ENCODE measurements at regions of chr21 and their contacts with region 1.

Region 1: GRCh38 chr21:32770871-32771523 is 558 bp downstream of the PAXBP1 start:
- DNase-seq: peak in 5 of 9 experiments; percentile 26 to 59 (median 51)
- ATAC-seq: peak; percentile 15
- H3K4me3 ChIP-seq: peak overlapping the region; percentile 69 to 82
- H3K4me3 Mint-ChIP-seq: peak overlapping the region; percentile 96
- H3K27ac ChIP-seq: peak overlapping the region; percentile 69 to 75
- H3K27ac Mint-ChIP-seq: peak overlapping the region; percentile 87
- H3K4me1 ChIP-seq: peaks cover 42% of the 10 kb centered on the region
- H3K4me1 Mint-ChIP-seq: peaks cover 66% of the 10 kb centered on the region
- H3K27me3 ChIP-seq: no peaks in the 10 kb centered on the region
- H3K27me3 Mint-ChIP-seq: no peaks in the 10 kb centered on the region
- CTCF ChIP-seq: no peak

Region 2: DNA sequence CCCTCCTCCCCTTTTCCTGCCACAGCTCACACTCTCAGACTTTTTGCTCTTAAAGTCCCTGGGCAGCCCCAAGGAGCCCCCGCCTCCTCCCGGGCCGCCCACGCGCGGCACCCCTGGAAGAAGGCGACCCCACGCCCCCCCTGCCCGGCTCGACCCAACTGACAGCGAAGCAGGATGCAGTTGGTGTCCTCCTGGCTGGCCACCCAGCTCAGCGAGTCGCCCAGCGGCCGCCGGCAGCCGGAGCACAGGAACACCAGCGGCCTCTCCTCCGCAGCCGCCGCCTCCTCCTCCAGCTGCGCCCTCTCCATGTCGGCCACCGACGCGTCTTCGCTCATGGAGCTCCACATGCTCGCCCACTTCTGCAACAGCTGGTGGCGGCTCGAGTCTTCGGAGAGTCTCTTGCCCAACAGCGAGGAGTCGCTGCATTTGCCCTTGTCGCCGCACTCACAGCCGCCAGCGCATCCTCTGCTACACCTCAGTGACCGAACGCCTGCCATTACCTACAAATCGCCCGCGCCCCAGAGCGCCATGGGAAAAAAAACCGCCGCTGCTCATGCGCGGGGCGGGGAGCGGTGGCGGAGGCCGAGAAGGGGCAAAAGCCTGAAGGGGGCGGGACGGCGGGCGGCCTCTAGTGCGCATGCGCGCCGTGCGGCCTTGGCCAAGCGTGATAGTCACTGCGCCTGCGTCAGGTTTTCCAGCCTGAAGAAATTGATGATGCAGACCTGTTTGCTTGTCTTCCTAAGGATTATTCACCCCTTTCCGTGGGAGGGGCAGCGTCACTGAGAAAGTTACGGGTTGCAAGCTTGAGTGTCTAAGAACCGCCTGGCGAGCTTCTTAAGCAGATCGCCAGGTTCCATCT is 492.2 kb before region 1 on chr21 and contains the start of gene MIS18A:
- CTCF ChIA-PET with region 1: no interaction called
- POLR2A ChIA-PET with region 1: no interaction called
- intact Hi-C with region 1: loop called (anchors 2 to 5 kb)
- DNase-seq: peak; percentile 95 to 99 (median 97)
- ATAC-seq: peak; percentile 95
- H3K4me3 ChIP-seq: peak within 1 kb of the TSS; percentile 67 to 74
- H3K4me3 Mint-ChIP-seq: peak within 1 kb of the TSS; percentile 99
- H3K27ac ChIP-seq: peak within 1 kb of the TSS; percentile 33 to 69
- H3K27ac Mint-ChIP-seq: peak within 1 kb of the TSS; percentile 92
- H3K4me1 ChIP-seq: peaks cover 16% of the 10 kb centered on the region
- H3K4me1 Mint-ChIP-seq: peaks cover 31% of the 10 kb centered on the region
- H3K27me3 ChIP-seq: no peaks in the 10 kb centered on the region
- H3K27me3 Mint-ChIP-seq: no peaks in the 10 kb centered on the region
- CTCF ChIP-seq: no peak
- total RNA-seq, gene MIS18A: 3.7 to 5.1 TPM

Region 3: GRCh38 chr21:32412162-32413014 is 358.6 kb before region 1 on chr21 and contains the start of gene EVA1C:
- CTCF ChIA-PET with region 1: no interaction called
- POLR2A ChIA-PET with region 1: interaction called, 4 read pairs
- intact Hi-C with region 1: loop called in 1 of 2 experiments (anchors 5 kb)
- DNase-seq: peak; percentile 51 to 90 (median 76)
- ATAC-seq: peak; percentile 71
- H3K4me3 ChIP-seq: peak within 1 kb of the TSS; percentile 63 to 96
- H3K4me3 Mint-ChIP-seq: peak within 1 kb of the TSS; percentile 95
- H3K27ac ChIP-seq: peak within 1 kb of the TSS; percentile 86 to 93
- H3K27ac Mint-ChIP-seq: peak within 1 kb of the TSS; percentile 96
- H3K4me1 ChIP-seq: peaks cover 35% of the 10 kb centered on the region
- H3K4me1 Mint-ChIP-seq: peaks cover 48% of the 10 kb centered on the region
- H3K27me3 ChIP-seq: no peaks in the 10 kb centered on the region
- H3K27me3 Mint-ChIP-seq: no peaks in the 10 kb centered on the region
- CTCF ChIP-seq: peak; percentile 23
- total RNA-seq, gene EVA1C: 6.9 to 10.3 TPM

Region 4: DNA sequence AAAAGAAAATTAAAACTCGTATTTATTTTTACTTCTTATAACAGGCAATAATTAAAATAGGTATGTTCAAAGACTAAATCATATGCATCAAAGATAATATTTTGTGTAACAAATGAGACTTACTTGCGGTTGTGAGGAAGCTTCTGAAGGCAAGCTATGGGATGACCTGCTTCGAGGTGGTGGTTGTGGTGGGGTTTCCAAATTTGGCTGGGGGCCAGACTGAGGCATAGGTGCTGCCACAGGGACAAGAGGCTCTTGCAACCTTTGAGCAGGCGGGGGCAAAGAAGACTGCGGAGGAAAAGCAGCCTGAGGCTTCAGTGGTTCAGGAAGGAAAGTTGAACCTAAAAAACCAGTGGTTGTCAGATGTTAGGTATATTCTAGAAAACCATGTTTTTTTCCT is 132.2 kb before region 1 on chr21:
- CTCF ChIA-PET with region 1: no interaction called
- POLR2A ChIA-PET with region 1: no interaction called
- intact Hi-C with region 1: no loop called
- DNase-seq: no peak
- ATAC-seq: no peak
- H3K4me3 ChIP-seq: no peak overlapping the region
- H3K4me3 Mint-ChIP-seq: no peak overlapping the region
- H3K27ac ChIP-seq: no peak overlapping the region
- H3K27ac Mint-ChIP-seq: no peak overlapping the region
- H3K4me1 ChIP-seq: no peaks in the 10 kb centered on the region
- H3K4me1 Mint-ChIP-seq: no peaks in the 10 kb centered on the region
- H3K27me3 ChIP-seq: no peaks in the 10 kb centered on the region
- H3K27me3 Mint-ChIP-seq: no peaks in the 10 kb centered on the region
- CTCF ChIP-seq: no peak

Region 5: DNA sequence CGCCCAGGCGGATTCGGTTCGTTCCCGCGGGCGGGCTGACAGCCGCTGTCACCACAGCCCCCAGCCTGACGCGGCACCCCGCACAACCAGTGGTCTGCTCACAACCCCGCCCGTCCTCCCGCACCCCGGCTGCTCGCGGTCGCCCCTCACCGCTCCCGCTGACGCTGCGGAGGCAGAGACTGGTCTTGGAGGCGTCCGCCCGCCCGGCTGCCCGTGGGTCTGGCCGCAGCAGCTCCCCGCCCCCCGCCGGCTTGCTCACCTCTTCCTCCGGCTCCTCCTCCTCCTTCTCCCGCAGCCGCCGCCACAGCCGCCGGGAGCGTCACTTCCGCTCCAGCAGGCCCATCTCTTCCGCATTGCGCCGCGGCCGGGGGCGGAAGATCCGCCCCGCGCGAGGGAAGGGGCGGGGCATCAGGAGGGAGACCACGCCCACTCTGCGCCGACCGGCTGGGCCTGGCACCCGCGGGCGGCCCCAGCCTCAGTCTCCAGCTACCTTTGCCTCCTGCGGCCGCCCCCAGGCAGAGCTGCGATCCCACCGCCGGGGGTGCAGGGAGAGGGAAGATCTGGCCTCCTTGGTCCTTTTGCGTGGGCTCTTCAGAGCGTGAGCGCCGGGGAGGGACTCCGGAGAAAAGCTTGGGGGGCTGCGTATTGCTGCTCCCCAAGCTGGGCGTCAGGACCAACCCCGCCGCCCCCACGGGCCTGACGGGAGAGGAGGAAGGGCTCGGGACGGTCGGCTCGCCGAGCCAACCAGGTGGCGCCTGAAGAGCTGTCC is 43.1 kb before region 1 on chr21 and contains the start of gene SYNJ1:
- CTCF ChIA-PET with region 1: interaction called, 5 read pairs
- POLR2A ChIA-PET with region 1: interaction called, 40 read pairs
- intact Hi-C with region 1: loop called (anchors 1 kb)
- DNase-seq: peak; percentile 86 to 96 (median 93)
- ATAC-seq: peak; percentile 86
- H3K4me3 ChIP-seq: peak within 1 kb of the TSS; percentile 86 to 99
- H3K4me3 Mint-ChIP-seq: peak within 1 kb of the TSS; percentile 94
- H3K27ac ChIP-seq: peak within 1 kb of the TSS; percentile 76 to 82
- H3K27ac Mint-ChIP-seq: peak within 1 kb of the TSS; percentile 93
- H3K4me1 ChIP-seq: peaks cover 45% of the 10 kb centered on the region
- H3K4me1 Mint-ChIP-seq: peaks cover 61% of the 10 kb centered on the region
- H3K27me3 ChIP-seq: no peaks in the 10 kb centered on the region
- H3K27me3 Mint-ChIP-seq: no peaks in the 10 kb centered on the region
- CTCF ChIP-seq: no peak
- total RNA-seq, gene SYNJ1: 10.5 to 10.7 TPM

Region 6: GRCh38 chr21:32826329-32827167 is 55.6 kb after region 1 on chr21:
- CTCF ChIA-PET with region 1: interaction called, 5 read pairs
- POLR2A ChIA-PET with region 1: no interaction called
- intact Hi-C with region 1: loop called in 1 of 2 experiments (anchors 2 kb)
- DNase-seq: peak in 6 of 9 experiments; percentile 7 to 64 (median 38)
- ATAC-seq: peak; percentile 70
- H3K4me3 ChIP-seq: no peak overlapping the region
- H3K4me3 Mint-ChIP-seq: no peak overlapping the region
- H3K27ac ChIP-seq: no peak overlapping the region
- H3K27ac Mint-ChIP-seq: no peak overlapping the region
- H3K4me1 ChIP-seq: no peaks in the 10 kb centered on the region
- H3K4me1 Mint-ChIP-seq: peaks cover 3% of the 10 kb centered on the region
- H3K27me3 ChIP-seq: peaks cover 0 to 2% of the 10 kb centered on the region in 2 experiments
- H3K27me3 Mint-ChIP-seq: no peaks in the 10 kb centered on the region
- CTCF ChIP-seq: peak; percentile 53

Region 7: GRCh38 chr21:33036430-33037162 is 265.6 kb after region 1 on chr21:
- CTCF ChIA-PET with region 1: no interaction called
- POLR2A ChIA-PET with region 1: no interaction called
- intact Hi-C with region 1: no loop called
- DNase-seq: peak in 6 of 9 experiments; percentile 8 to 58 (median 36)
- ATAC-seq: peak; percentile 70
- H3K4me3 ChIP-seq: no peak overlapping the region
- H3K4me3 Mint-ChIP-seq: peak overlapping the region; percentile 2
- H3K27ac ChIP-seq: no peak overlapping the region
- H3K27ac Mint-ChIP-seq: no peak overlapping the region
- H3K4me1 ChIP-seq: peaks cover 7% of the 10 kb centered on the region
- H3K4me1 Mint-ChIP-seq: peaks cover 10% of the 10 kb centered on the region
- H3K27me3 ChIP-seq: peaks cover 0 to 3% of the 10 kb centered on the region in 2 experiments
- H3K27me3 Mint-ChIP-seq: peaks cover 30% of the 10 kb centered on the region
- CTCF ChIP-seq: no peak

Region 8: DNA sequence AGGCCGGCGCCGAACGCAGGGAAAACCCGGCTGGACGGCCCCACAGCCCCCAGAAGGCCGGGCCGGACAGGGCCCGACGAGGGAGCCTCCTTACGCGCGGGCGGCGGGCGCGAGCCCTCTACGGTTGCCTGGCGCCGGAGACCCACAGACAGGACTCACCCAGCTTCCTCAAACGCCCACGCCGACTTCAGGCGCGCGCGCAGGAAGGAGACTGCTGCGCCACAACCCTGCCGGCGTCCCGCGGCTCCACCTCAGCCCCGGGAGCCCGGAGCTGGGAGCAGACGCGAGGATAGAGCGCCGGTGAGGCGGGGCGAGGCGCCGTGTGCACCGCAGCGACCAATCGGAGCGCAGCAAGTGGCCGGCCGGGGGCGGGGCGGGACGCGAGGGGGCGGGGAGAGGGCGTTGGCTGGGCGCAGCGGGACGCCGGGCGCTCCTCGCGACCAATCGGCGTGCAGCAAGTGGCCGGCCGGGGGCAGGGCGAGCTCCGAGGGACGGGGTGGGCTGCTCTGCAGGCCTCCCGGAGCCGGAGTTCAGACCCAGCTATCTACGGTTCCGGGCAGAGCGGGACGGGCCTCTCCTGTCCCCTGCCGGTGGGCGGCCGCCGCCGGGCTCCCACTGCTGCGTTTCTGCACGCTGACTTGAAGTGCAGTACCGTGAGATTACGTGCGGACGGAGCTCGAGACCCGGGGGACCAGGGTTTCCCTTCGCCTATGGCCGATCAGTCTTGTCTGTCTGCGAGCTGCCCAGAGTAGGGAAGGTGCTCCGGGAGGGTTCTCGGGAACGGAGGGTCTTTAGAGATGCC is 708.9 kb after region 1 on chr21 and contains the start of gene TMEM50B:
- CTCF ChIA-PET with region 1: no interaction called
- POLR2A ChIA-PET with region 1: interaction called, 15 read pairs
- intact Hi-C with region 1: loop called in 1 of 2 experiments (anchors 1 kb)
- DNase-seq: peak; percentile 94 to 98 (median 95)
- ATAC-seq: peak; percentile 87
- H3K4me3 ChIP-seq: peak within 1 kb of the TSS; percentile 79 to 88
- H3K4me3 Mint-ChIP-seq: peak within 1 kb of the TSS; percentile 89
- H3K27ac ChIP-seq: peak within 1 kb of the TSS; percentile 83 to 87
- H3K27ac Mint-ChIP-seq: peak within 1 kb of the TSS; percentile 96
- H3K4me1 ChIP-seq: peaks cover 13% of the 10 kb centered on the region
- H3K4me1 Mint-ChIP-seq: peaks cover 28% of the 10 kb centered on the region
- H3K27me3 ChIP-seq: no peaks in the 10 kb centered on the region
- H3K27me3 Mint-ChIP-seq: no peaks in the 10 kb centered on the region
- CTCF ChIP-seq: peak; percentile 31
- total RNA-seq, gene TMEM50B: 32.6 to 34.0 TPM

Region 9: DNA sequence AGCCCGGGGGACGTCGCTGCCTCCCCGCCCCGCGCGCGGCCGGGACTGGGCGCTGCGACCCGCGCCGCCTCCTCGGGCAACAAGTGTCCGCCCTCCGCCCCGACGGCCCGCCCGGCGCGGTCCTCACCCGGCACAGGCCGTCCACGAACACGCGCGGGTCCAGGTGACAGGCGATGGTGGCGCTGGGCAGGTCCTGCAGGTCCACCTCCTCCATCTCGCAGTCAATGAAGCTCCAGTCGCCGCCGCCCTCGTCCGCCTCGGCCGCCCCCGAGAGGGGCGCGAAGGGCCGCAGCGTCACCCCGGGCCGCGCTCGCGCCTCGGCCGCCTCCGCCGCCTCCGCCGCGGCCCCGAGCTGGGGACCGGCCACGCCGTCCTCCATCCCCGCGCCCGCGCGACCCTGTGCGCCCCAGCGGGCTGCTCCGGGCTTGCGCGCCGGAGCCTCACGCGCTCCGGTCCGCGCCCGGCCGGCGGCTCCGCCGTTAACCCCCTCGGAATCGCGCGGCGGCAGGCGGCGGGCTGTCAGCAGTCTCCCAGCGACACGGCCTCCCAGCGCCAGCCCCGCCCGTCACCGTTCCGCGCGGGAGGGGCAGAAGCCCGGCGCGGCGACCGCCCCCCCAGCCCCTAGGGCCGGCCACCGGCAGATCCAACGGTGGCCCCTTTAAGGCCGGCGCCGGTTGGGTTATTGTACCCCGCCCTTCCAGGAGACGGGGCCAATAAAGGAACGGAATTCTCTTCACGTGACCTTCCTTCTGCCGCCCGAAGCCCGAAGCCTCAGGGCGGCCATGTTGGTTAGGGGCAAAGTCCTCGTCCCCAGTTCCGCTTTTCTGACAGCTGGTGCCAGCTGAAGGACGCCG is 1843.9 kb after region 1 on chr21 and contains the start of gene RCAN1:
- CTCF ChIA-PET with region 1: no interaction called
- POLR2A ChIA-PET with region 1: no interaction called
- intact Hi-C with region 1: loop called in 1 of 2 experiments (anchors 5 kb)
- DNase-seq: peak; percentile 64 to 94 (median 85)
- ATAC-seq: peak; percentile 95
- H3K4me3 ChIP-seq: peak within 1 kb of the TSS; percentile 51 to 63
- H3K4me3 Mint-ChIP-seq: peak within 1 kb of the TSS; percentile 90
- H3K27ac ChIP-seq: peak within 1 kb of the TSS; percentile 41 to 68
- H3K27ac Mint-ChIP-seq: peak within 1 kb of the TSS; percentile 91
- H3K4me1 ChIP-seq: peaks cover 13% of the 10 kb centered on the region
- H3K4me1 Mint-ChIP-seq: peaks cover 21% of the 10 kb centered on the region
- H3K27me3 ChIP-seq: no peaks in the 10 kb centered on the region
- H3K27me3 Mint-ChIP-seq: no peaks in the 10 kb centered on the region
- CTCF ChIP-seq: no peak
- total RNA-seq, gene RCAN1: 0.73 to 1.0 TPM

Measured in CD8-positive, alpha-beta T cell (primary cell).